ENCODE measurements at regions of chr1 and their contacts with region 1.

Region 1: DNA sequence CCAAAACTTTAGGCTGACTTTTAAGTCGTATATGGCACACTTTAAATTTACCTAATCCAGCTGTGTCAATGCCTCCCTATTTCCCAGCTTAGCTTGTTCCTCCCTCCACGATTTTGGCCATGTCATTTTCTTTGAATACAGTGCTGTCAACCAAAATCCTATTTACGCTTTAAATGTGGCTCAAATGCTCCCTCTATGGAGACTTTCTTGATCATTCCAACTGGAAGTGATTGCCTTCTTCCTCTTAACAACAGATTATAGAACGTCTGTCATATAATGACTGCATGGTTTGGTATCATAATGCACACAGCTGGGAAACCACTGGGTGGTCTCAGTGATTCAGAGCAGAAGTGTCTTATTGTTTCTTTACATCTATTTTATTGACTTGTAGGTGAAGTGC is 18.9 kb upstream of the BATF3 start:
- H3K4me3 Mint-ChIP-seq: no peak overlapping the region
- H3K27ac Mint-ChIP-seq: peak overlapping the region; percentile 40
- H3K4me1 Mint-ChIP-seq: peaks cover 43% of the 10 kb centered on the region
- H3K27me3 Mint-ChIP-seq: peaks cover 16% of the 10 kb centered on the region

Region 2: DNA sequence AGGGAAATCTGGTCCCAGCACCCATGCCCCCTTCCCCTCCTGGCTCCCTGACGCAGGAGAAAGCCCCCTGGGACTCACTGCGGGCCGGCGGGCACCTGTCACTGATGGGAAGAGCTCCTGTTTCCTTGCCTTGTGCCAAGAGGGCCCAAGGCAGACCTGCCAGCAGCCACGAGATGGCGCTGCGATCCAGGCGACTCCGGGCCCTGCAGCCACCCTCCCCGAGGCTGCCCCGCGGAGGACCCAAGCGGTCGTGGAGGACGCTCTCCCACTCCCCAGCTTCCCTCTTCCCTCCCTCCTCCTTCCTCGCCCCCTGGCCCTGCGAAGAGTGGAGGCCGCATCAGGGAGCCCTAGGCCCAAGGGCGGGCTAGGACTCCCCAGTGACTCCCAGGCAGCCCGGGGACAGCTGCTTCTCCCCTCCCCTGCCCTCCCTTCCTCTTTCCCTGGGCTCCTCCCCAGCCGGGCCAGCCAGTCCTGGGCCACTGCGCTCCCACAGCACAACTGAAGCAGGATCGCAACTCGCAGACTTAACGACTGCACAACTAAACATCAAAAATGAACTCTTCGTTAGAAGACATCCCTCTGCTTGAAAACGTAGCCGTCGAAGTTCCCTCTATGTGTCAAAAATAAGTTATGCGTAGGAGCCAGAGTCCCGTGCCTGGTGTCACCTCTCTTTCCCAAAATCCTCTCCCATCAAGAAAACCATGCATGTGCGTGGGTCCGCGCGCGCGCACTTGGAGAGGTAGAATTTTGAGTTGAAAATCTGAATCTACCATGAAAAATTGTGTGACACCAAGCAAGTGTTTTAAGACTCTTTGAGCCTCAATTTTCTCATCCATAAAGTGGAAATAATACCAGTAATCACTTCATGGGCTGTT is 53.0 kb before region 1 on chr1:
- intact Hi-C with region 1: loop called (anchors 5 kb)
- H3K4me3 Mint-ChIP-seq: peak overlapping the region; percentile 87
- H3K27ac Mint-ChIP-seq: peak overlapping the region; percentile 99
- H3K4me1 Mint-ChIP-seq: peaks cover 75% of the 10 kb centered on the region
- H3K27me3 Mint-ChIP-seq: peaks cover 5% of the 10 kb centered on the region

Region 3: GRCh38 chr1:212683357-212683722 is 35.2 kb before region 1 on chr1:
- intact Hi-C with region 1: no loop called
- H3K4me3 Mint-ChIP-seq: peak overlapping the region; percentile 53
- H3K27ac Mint-ChIP-seq: no peak overlapping the region
- H3K4me1 Mint-ChIP-seq: peaks cover 31% of the 10 kb centered on the region
- H3K27me3 Mint-ChIP-seq: no peaks in the 10 kb centered on the region